ENCODE measurements at regions of chr3 and their contacts with region 1.

Region 1: GRCh38 chr3:195442573-195443390 is at the start of gene ACAP2:
- DNase-seq: peak; percentile 99
- ATAC-seq: peak; percentile 97
- H3K4me3 ChIP-seq: peak within 1 kb of the TSS; percentile 96
- H3K27ac ChIP-seq: peak within 1 kb of the TSS; percentile 96
- H3K4me1 ChIP-seq: no peaks in the 10 kb centered on the region; the same call in 1 of the 2 replicates
- H3K27me3 ChIP-seq: no peaks in the 10 kb centered on the region
- CTCF ChIP-seq: no peak
- POLR2A ChIP-seq: peak; percentile 95
- RAD21 ChIP-seq: no peak
- total RNA-seq, gene ACAP2: 35.1 and 55.8 TPM in 2 replicates

Region 2: GRCh38 chr3:195271116-195271858 is 171.5 kb before region 1 on chr3 and contains the start of gene XXYLT1:
- CTCF ChIA-PET with region 1: interaction called, 5 read pairs
- POLR2A ChIA-PET with region 1: no interaction called
- dilution Hi-C with region 1: no loop called
- in situ Hi-C with region 1: no loop called
- intact Hi-C with region 1: loop called (anchors 2 kb)
- DNase-seq: peak; percentile 80
- ATAC-seq: peak; percentile 89
- H3K4me3 ChIP-seq: peak within 1 kb of the TSS; percentile 93
- H3K27ac ChIP-seq: peak within 1 kb of the TSS; percentile 86
- H3K4me1 ChIP-seq: peaks cover 5% of the 10 kb centered on the region
- H3K27me3 ChIP-seq: no peaks in the 10 kb centered on the region
- CTCF ChIP-seq: peak; percentile 98
- POLR2A ChIP-seq: 0 out of 2 replicates have a peak, but pooled peaks have one; percentile 22
- RAD21 ChIP-seq: peak; percentile 89
- total RNA-seq, gene XXYLT1: 13.1 and 14.7 TPM in 2 replicates

Region 3: DNA sequence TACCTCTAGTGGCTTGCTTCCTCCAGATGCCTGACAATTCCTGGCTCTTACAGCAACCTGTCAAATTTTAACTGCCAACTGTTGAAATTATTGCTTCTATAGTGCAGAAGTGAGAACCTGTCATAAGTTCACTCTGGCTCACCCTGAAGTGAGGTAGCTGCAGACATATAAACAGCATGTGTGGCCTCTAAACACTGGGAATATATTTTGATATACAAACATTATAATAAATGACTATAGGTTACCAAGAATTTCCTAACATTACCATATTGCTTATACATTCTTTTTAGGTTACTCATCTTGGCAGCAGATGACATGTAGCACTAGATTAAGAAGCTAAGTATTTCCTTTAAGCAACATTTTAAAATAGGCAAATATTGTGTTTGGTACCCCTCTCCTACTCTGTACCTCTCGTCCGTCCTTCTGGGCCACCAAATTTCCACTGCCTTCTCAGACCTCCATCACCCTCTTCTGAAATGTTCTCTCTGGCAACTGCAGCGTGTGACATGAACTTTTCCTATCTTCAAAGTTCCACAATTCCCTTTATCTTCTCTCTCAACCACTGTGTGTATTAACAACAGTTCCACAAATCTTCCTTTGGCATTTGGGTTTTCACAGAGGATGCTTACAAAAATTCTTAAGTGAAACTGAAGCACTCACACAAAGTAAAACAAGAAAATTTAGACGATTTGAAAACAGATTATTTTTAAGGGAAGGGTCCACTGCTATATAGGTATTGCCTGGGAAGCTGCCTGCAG is 156.5 kb before region 1 on chr3:
- CTCF ChIA-PET with region 1: no interaction called
- POLR2A ChIA-PET with region 1: no interaction called
- dilution Hi-C with region 1: no loop called
- in situ Hi-C with region 1: no loop called
- intact Hi-C with region 1: loop called (anchors 1 kb)
- DNase-seq: peak; percentile 88
- ATAC-seq: peak; percentile 86
- H3K4me3 ChIP-seq: no peak overlapping the region
- H3K27ac ChIP-seq: peak overlapping the region; percentile 65; the same call in 1 of the 2 replicates
- H3K4me1 ChIP-seq: peaks cover 8% of the 10 kb centered on the region
- H3K27me3 ChIP-seq: no peaks in the 10 kb centered on the region
- CTCF ChIP-seq: no peak
- POLR2A ChIP-seq: no peak
- RAD21 ChIP-seq: no peak

Region 4: DNA sequence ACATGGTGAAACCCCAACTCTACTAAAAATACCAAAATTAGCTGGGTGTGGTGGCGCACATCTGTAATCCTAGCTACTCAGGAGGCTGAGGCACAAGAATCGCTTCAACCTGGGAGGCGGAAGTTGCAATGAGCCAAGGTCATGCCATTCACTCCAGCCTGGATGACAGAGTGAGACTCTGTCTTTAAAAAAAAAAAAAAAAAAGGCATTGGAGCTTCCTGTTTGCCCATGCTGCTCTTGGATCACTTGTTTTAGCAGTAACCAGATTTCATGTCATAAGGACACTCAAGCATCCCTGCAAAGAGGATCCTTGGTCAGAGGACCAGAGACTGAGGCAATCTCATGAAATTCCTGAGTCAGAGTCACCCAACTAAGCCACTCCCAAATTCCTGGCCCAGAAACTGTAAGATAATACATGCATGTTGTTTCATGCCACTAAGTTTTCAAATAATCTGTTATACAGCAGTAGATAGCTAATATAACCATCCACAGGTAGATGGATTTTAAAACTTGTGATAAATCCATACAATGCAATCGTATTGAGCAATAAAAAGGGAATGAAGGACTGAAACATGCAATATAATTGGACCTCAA is 89.8 kb before region 1 on chr3:
- CTCF ChIA-PET with region 1: no interaction called
- POLR2A ChIA-PET with region 1: no interaction called
- dilution Hi-C with region 1: no loop called
- in situ Hi-C with region 1: no loop called
- intact Hi-C with region 1: loop called (anchors 10 kb)
- DNase-seq: peak; percentile 89
- ATAC-seq: peak; percentile 92
- H3K4me3 ChIP-seq: no peak overlapping the region
- H3K27ac ChIP-seq: peak overlapping the region; percentile 86
- H3K4me1 ChIP-seq: 0 out of 2 replicates have a peak, but pooled peaks cover 5% of the 10 kb centered on the region
- H3K27me3 ChIP-seq: no peaks in the 10 kb centered on the region
- CTCF ChIP-seq: no peak
- POLR2A ChIP-seq: no peak
- RAD21 ChIP-seq: no peak

Region 5: DNA sequence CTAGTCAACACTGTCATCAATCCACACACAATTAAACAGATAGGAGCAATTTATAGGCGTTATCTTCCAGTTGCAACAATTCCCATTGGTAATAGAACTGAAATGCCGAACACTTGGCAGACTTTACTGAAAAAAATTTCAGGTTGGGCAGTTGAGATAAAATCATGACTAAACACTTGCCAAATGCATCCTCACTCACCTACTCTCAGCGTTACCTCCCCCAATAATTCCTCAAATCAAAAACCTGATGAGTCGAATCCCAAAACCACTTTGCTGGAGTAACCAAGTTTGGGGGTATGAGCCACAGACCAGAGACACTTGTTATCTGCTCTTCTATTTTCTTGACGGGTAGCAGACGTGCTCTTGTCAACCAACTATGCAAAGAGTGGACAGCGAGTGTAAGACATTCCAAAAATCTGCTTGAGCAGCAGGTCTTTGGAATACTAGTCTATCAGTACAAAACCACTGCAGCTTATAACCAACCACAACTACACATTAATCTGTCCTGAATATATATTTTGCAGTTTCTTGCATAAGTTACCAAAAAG is 70.1 kb after region 1 on chr3:
- CTCF ChIA-PET with region 1: no interaction called
- POLR2A ChIA-PET with region 1: no interaction called
- dilution Hi-C with region 1: no loop called
- in situ Hi-C with region 1: no loop called
- intact Hi-C with region 1: loop called (anchors 5 kb)
- DNase-seq: no peak
- ATAC-seq: no peak
- H3K4me3 ChIP-seq: no peak overlapping the region
- H3K27ac ChIP-seq: no peak overlapping the region
- H3K4me1 ChIP-seq: no peaks in the 10 kb centered on the region
- H3K27me3 ChIP-seq: no peaks in the 10 kb centered on the region
- CTCF ChIP-seq: no peak
- POLR2A ChIP-seq: no peak
- RAD21 ChIP-seq: no peak

Region 6: GRCh38 chr3:195558602-195559001 is 115.8 kb after region 1 on chr3:
- CTCF ChIA-PET with region 1: no interaction called
- POLR2A ChIA-PET with region 1: no interaction called
- dilution Hi-C with region 1: no loop called
- in situ Hi-C with region 1: no loop called
- intact Hi-C with region 1: no loop called
- DNase-seq: peak; percentile 21
- ATAC-seq: no peak
- H3K4me3 ChIP-seq: no peak overlapping the region
- H3K27ac ChIP-seq: no peak overlapping the region
- H3K4me1 ChIP-seq: no peaks in the 10 kb centered on the region
- H3K27me3 ChIP-seq: peaks cover 30% of the 10 kb centered on the region
- CTCF ChIP-seq: peak; percentile 33
- POLR2A ChIP-seq: no peak
- RAD21 ChIP-seq: peak; percentile 32; the same call in 1 of the 2 replicates